CD4-positive, alpha-beta T cell (primary cell): ENCODE measurements at regions of chr1 and their contacts with region 1.

Region 1: DNA sequence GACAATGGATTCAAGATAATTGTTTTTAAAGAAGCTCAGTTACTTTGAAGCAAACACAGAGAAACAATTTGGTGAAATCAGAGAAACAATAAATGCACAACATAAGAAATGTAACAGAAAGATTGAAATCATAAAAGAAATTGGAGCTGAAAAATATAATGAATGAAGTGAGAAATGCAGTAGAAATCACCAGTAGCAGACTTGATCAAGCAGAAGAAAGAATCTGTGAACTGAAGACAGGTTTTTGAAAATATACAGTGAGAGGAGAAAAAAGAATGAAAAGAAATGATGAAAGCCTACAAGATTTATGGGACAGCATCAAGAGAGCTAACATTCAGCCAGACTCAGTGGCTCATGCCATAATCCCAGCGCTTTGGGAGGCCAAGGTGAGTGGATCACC is 4.2 kb upstream of the SELP start:
- DNase-seq: no peak
- ATAC-seq: no peak
- H3K4me3 ChIP-seq: no peak overlapping the region
- H3K4me3 Mint-ChIP-seq: no peak overlapping the region
- H3K27ac ChIP-seq: no peak overlapping the region
- H3K27ac Mint-ChIP-seq: no peak overlapping the region
- H3K4me1 ChIP-seq: no peaks in the 10 kb centered on the region
- H3K4me1 Mint-ChIP-seq: peaks cover 27% of the 10 kb centered on the region
- H3K27me3 ChIP-seq: no peaks in the 10 kb centered on the region
- H3K27me3 Mint-ChIP-seq: no peaks in the 10 kb centered on the region
- CTCF ChIP-seq: no peak

Region 2: GRCh38 chr1:169680377-169681019 is 46.4 kb after region 1 on chr1:
- CTCF ChIA-PET with region 1: no interaction called
- POLR2A ChIA-PET with region 1: interaction called, 3 read pairs
- intact Hi-C with region 1: loop called (anchors 1 to 5 kb)
- DNase-seq: peak in 5 of 14 experiments; percentile 15 to 54 (median 34)
- ATAC-seq: peak; percentile 48
- H3K4me3 ChIP-seq: no peak overlapping the region
- H3K4me3 Mint-ChIP-seq: peak overlapping the region; percentile 61
- H3K27ac ChIP-seq: no peak overlapping the region
- H3K27ac Mint-ChIP-seq: peak overlapping the region; percentile 72
- H3K4me1 ChIP-seq: peaks cover 58% of the 10 kb centered on the region
- H3K4me1 Mint-ChIP-seq: peaks cover 61% of the 10 kb centered on the region
- H3K27me3 ChIP-seq: no peaks in the 10 kb centered on the region
- H3K27me3 Mint-ChIP-seq: no peaks in the 10 kb centered on the region
- CTCF ChIP-seq: no peak

Region 3: GRCh38 chr1:169689395-169689794 is 55.2 kb after region 1 on chr1:
- CTCF ChIA-PET with region 1: no interaction called
- POLR2A ChIA-PET with region 1: interaction called, 7 read pairs
- intact Hi-C with region 1: loop called in 1 of 2 experiments (anchors 5 kb)
- DNase-seq: no peak
- ATAC-seq: no peak
- H3K4me3 ChIP-seq: no peak overlapping the region
- H3K4me3 Mint-ChIP-seq: peak overlapping the region; percentile 17
- H3K27ac ChIP-seq: peak overlapping the region; percentile 34 to 38
- H3K27ac Mint-ChIP-seq: no peak overlapping the region
- H3K4me1 ChIP-seq: peaks cover 74% of the 10 kb centered on the region
- H3K4me1 Mint-ChIP-seq: peaks cover 23% of the 10 kb centered on the region
- H3K27me3 ChIP-seq: no peaks in the 10 kb centered on the region
- H3K27me3 Mint-ChIP-seq: no peaks in the 10 kb centered on the region
- CTCF ChIP-seq: no peak